Astrocyte of the cerebellum (primary cell): ENCODE measurements at regions of chr7 and their contacts with region 1.

Region 1: GRCh38 chr7:30012757-30013156 is 13.7 kb downstream of the FKBP14 start:
- DNase-seq: no peak
- H3K4me3 ChIP-seq: no peak overlapping the region
- CTCF ChIP-seq: no peak

Region 2: GRCh38 chr7:29962035-29962434 is 50.7 kb before region 1 on chr7:
- in situ Hi-C with region 1: loop called (anchors 5 kb)
- DNase-seq: no peak
- H3K4me3 ChIP-seq: no peak overlapping the region
- CTCF ChIP-seq: no peak

Region 3: GRCh38 chr7:30119890-30120577 is 107.3 kb after region 1 on chr7:
- in situ Hi-C with region 1: no loop called
- DNase-seq: no peak
- H3K4me3 ChIP-seq: no peak overlapping the region
- CTCF ChIP-seq: no peak

Region 4: DNA sequence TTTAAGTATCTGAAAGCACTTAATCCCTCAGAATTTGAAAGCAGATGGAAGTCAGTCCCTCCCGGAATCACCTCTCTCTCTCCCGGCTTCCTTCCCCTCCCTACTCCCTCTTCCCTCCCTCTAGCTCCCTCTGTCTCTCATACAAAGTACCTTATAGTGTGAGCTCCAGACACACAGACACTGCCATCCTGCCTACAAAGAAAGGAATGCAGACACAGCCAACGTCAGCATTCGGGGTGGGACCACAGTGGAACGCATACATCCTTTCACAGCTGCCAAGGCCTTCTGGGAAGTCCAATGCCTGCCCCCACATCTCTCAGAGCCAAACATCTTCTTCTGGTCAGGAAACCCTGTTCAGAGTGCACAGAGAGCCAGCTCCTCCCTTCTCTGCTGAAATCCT is 456.5 kb after region 1 on chr7:
- in situ Hi-C with region 1: no loop called
- DNase-seq: peak; percentile 97
- H3K4me3 ChIP-seq: no peak overlapping the region
- CTCF ChIP-seq: peak; percentile 68